Common myeloid progenitor, CD34-positive (primary cell): ENCODE measurements at regions of chr4 and their contacts with region 1.

Region 1: GRCh38 chr4:177047070-177047850 is 254.5 kb upstream of the VEGFC start:
- DNase-seq: peak; percentile 63 to 85 (median 81)
- H3K4me3 ChIP-seq: no peak overlapping the region
- H3K27ac ChIP-seq: no peak overlapping the region
- H3K4me1 ChIP-seq: no peaks in the 10 kb centered on the region
- H3K27me3 ChIP-seq: no peaks in the 10 kb centered on the region

Region 2: GRCh38 chr4:176377780-176378179 is 669.5 kb before region 1 on chr4:
- CTCF ChIA-PET with region 1: interaction called, 17 read pairs
- POLR2A ChIA-PET with region 1: no interaction called
- DNase-seq: peak in 2 of 3 donors; percentile 14 to 19
- H3K4me3 ChIP-seq: no peak overlapping the region
- H3K27ac ChIP-seq: no peak overlapping the region
- H3K4me1 ChIP-seq: no peaks in the 10 kb centered on the region
- H3K27me3 ChIP-seq: no peaks in the 10 kb centered on the region

Region 3: DNA sequence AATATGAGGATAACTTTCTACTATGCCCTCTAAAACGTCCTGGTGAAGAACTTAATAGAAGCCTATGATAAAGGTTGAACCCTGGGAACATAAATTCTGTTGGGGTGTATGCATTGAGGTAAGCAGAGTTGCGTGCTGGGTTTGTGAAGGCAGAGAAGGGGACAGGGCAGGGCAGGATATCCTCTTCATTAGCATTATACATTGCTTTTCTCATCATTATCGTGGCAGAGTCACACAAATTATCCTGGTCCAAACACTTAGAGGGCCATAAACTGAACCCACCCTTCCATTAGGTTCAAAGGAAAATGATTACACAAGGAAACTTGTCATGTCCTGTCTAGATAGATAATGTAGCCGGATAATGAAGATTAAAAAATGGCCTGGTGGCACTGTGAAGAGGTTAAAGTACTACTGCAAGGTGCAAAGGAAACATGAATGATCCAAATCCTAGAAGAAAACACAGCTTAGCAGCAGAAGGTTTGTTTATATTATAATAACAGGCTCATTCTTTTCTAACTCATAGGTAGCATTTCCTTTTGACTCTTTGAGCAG is 538.4 kb before region 1 on chr4:
- CTCF ChIA-PET with region 1: no interaction called
- POLR2A ChIA-PET with region 1: no interaction called
- DNase-seq: no peak
- H3K4me3 ChIP-seq: no peak overlapping the region
- H3K27ac ChIP-seq: no peak overlapping the region
- H3K4me1 ChIP-seq: no peaks in the 10 kb centered on the region
- H3K27me3 ChIP-seq: no peaks in the 10 kb centered on the region

Region 4: DNA sequence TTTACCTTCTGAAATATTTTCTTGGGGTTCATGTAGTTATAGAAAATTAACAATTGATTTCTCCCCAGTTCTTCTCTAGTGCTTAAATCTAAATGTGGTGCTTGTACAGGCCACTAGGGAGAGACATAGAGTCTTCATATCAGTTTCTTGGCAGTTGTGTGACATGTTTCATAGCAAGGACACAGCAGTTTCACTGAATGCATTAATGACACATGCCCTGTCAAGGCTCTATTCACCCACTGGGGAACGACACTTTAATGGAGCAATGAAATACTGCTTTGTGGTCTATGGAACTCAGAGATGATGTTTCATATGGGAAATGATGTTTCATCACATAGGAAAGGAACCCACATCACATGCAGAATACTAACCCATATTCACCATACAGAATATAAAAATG is 257.3 kb before region 1 on chr4:
- CTCF ChIA-PET with region 1: interaction called, 16 read pairs
- POLR2A ChIA-PET with region 1: no interaction called
- DNase-seq: peak; percentile 77 to 92 (median 91)
- H3K4me3 ChIP-seq: no peak overlapping the region
- H3K27ac ChIP-seq: no peak overlapping the region
- H3K4me1 ChIP-seq: peaks cover 0 to 14% (median 6%) of the 10 kb centered on the region in 4 experiments
- H3K27me3 ChIP-seq: peaks cover 8 to 30% (median 25%) of the 10 kb centered on the region in 5 experiments

Region 5: DNA sequence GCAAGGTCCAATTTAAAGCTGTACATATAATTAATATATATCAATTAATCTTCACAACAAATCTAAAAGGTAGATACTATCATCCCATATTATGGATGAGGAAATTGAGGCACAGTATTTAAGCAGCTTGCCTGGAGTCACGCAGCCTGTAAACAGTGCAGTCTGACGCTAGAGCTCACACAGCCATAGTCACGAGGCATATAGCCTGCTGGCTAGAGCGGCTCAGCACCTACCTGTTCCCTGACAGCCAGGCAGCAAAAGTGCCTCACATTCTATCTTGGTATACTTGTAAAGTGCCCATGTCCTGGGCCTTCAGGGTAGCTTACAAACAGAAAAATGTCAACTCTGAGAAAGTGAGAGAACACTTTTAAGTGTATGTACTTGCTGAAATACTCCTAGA is 39.8 kb after region 1 on chr4:
- CTCF ChIA-PET with region 1: no interaction called
- POLR2A ChIA-PET with region 1: no interaction called
- DNase-seq: no peak
- H3K4me3 ChIP-seq: no peak overlapping the region
- H3K27ac ChIP-seq: no peak overlapping the region
- H3K4me1 ChIP-seq: no peaks in the 10 kb centered on the region
- H3K27me3 ChIP-seq: no peaks in the 10 kb centered on the region

Region 6: DNA sequence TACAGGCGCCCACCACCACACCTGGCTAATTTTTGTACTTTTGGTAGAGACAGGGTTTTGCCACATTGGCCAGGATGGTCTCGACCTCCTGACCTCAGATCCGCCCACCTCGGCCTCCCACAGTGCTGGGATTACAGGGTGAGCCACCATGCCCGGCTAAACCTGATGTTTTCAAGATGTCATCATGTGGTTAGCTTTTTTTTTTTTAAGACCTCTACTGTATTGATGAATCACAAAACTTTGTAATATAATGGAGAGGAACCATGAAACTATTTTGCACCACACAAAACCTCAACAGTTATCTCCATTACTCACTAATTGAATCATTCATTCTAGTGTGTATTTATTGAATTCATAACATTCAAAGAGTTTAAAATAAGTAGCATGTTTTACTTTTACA is 167.7 kb after region 1 on chr4:
- CTCF ChIA-PET with region 1: no interaction called
- POLR2A ChIA-PET with region 1: no interaction called
- DNase-seq: no peak
- H3K4me3 ChIP-seq: no peak overlapping the region
- H3K27ac ChIP-seq: no peak overlapping the region
- H3K4me1 ChIP-seq: no peaks in the 10 kb centered on the region
- H3K27me3 ChIP-seq: no peaks in the 10 kb centered on the region